ENCODE measurements at regions of chr5 and their contacts with region 1.

Region 1: GRCh38 chr5:111530298-111530740 is 18.0 kb upstream of the STARD4 start:
- DNase-seq: no peak
- H3K4me3 ChIP-seq: no peak overlapping the region
- H3K27ac ChIP-seq: no peak overlapping the region
- H3K27me3 ChIP-seq: no peaks in the 10 kb centered on the region
- CTCF ChIP-seq: no peak

Region 2: DNA sequence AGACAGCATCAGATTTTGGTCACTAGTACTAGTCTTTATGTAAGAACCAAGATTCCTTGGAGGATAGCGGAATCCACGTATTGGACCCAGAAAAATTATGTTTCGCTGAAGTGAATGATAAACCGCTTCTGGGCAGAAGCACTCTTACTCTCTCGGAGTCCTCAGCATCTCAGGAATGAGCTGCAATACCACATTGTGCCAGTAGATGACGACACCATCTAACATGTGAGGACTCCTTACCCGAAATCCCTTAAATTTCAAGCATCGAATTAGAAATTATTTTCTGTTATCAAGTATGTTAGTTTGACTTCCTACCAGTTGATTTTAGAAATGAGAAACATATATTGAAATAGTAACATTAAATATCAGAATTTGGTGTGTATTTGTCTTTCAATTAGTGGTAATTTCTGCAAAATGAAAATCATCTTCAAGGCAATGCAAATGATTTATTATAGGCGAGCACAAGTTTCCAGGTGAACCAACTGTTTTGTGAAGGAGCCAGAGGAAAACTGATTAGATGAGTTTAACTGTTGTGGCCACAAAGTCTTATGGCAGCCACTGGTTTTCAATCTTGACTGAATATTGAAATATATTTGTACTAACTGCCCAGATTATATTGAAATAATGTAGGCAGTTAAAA is 372.1 kb before region 1 on chr5:
- CTCF ChIA-PET with region 1: interaction called, 10 read pairs
- POLR2A ChIA-PET with region 1: no interaction called
- DNase-seq: peak; percentile 53
- H3K4me3 ChIP-seq: no peak overlapping the region
- H3K27ac ChIP-seq: no peak overlapping the region
- H3K27me3 ChIP-seq: no peaks in the 10 kb centered on the region
- CTCF ChIP-seq: peak; percentile 100

Region 3: DNA sequence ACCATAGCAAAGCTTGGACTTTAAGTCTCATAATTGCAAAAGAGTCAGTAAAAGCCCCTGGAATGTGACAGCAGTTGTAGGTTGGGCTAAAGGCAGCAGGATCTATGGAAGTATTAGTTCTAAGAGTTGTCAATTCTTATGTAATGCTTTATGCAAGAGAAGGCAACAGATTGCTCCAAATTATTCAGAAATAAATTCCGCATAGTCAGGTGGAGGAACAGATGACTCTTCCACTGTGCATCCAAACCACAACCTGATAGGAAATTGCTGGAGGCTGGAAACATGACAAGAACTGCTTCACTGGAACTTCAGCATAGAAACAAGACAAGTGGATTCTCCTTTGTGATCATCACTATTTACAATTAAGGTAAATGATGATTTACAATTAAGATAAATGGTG is 119.0 kb before region 1 on chr5:
- CTCF ChIA-PET with region 1: no interaction called
- POLR2A ChIA-PET with region 1: no interaction called
- DNase-seq: no peak
- H3K4me3 ChIP-seq: no peak overlapping the region
- H3K27ac ChIP-seq: no peak overlapping the region
- H3K27me3 ChIP-seq: no peaks in the 10 kb centered on the region
- CTCF ChIP-seq: no peak

Region 4: DNA sequence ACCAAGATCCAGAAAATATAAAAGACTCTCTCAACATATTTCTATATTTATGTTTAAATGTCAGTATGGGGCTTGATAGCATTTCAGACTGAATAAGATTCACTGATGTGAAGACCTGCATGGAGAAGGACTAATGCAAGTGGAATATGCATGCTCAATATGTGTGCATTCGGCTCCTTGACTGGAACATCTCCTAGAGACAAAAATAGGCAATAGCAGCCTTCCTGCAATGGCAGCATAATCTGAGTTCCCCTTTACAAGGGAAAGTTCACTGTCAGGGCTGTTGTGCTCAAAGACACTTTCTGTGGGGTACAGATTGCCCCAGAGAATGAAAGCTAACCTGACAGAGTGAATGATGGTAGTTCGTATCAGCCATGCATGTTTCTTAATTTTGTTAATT is 60.4 kb before region 1 on chr5:
- CTCF ChIA-PET with region 1: no interaction called
- POLR2A ChIA-PET with region 1: no interaction called
- DNase-seq: no peak
- H3K4me3 ChIP-seq: no peak overlapping the region
- H3K27ac ChIP-seq: no peak overlapping the region
- H3K27me3 ChIP-seq: no peaks in the 10 kb centered on the region
- CTCF ChIP-seq: no peak

Region 5: DNA sequence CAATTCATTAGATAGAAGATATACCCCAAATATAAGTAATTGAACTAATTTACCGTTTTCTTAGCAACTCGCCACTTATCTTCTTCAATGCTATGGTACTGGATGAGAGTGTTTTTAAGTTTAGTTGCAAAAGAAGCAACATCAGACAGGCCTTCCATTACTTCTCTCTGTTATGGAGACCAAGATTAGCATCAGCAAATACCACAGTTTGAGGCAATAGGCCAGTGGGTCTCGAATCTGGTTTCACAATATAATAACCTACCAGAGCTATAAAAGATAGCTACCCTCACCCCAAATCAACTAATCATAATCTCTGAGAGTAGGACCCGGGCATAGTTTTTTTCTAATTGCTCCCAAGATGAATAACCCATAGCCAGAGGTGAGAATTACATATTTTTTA is 23.0 kb before region 1 on chr5:
- CTCF ChIA-PET with region 1: interaction called, 61 read pairs
- POLR2A ChIA-PET with region 1: no interaction called
- DNase-seq: no peak
- H3K4me3 ChIP-seq: no peak overlapping the region
- H3K27ac ChIP-seq: no peak overlapping the region
- H3K27me3 ChIP-seq: no peaks in the 10 kb centered on the region
- CTCF ChIP-seq: no peak

Region 6: GRCh38 chr5:111550279-111551020 is 20.1 kb after region 1 on chr5:
- CTCF ChIA-PET with region 1: interaction called, 62 read pairs
- POLR2A ChIA-PET with region 1: no interaction called
- DNase-seq: peak; percentile 94
- H3K4me3 ChIP-seq: no peak overlapping the region
- H3K27ac ChIP-seq: no peak overlapping the region
- H3K27me3 ChIP-seq: no peaks in the 10 kb centered on the region
- CTCF ChIP-seq: peak; percentile 66

Region 7: DNA sequence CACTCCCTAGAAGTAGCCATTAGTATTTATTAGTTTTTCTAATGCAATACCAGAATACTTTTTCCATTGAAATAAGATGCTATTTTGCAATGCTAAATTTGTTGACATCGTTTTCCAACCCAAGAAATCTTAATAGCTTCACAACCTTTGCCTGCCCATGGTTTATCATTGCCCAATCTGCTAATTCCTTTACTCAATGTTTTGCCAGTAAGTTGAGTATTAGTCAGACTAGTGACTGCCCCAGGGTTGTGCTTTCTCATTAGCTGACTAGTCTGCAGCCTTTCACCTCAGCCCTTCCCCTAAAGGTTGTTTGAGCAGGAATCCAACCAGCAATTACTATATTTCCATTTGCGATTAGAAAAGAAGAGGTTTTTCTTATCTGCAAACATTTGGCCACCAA is 163.9 kb after region 1 on chr5:
- CTCF ChIA-PET with region 1: interaction called, 11 read pairs
- POLR2A ChIA-PET with region 1: no interaction called
- DNase-seq: no peak
- H3K4me3 ChIP-seq: no peak overlapping the region
- H3K27ac ChIP-seq: no peak overlapping the region
- H3K27me3 ChIP-seq: no peaks in the 10 kb centered on the region
- CTCF ChIP-seq: no peak

Region 8: DNA sequence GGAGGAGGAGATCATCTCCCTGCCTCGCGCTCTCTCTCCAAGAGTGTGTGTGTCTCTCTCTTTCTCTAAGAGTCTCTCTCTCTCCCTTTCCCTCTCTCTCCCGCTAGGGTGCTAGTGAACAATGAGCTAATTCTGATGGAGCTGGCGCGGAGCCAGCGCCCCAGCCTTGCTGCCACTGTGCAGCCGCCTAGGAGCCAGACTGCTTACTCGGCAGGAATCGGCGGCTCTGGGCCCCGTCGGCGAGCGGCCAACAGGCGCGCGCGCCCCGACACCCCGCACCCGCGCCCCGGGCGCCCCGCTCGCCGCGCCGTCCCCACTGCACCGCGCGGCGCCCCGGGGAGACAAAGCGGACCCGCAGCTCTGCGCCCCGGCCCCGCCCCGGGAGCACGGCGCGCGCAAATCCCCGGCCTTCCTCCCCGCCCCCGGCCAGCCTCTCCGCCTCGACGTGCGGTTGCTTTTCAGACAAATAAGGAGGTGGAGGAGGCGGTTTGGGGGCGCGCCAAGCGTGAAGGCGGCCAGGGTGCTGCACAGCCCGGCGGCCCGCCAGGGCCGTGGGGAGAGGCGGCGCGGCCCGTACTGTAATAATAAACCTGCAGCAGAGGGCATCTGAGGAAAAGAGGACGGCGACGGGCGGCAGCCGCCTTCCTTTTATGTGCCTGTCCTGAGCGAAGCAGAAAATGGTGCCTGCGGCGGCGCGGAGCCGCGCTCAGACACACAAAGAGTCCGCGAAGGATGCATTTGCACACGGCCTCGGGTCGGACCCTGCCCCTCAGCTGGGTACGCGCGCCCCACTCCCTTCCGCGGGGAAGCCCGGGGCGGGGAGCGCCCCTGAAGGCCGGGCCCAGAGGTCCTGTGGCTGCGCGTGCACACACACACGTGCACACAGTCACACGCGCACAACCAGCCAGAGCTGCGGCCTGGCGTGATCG is 227.3 kb after region 1 on chr5:
- CTCF ChIA-PET with region 1: interaction called, 12 read pairs
- POLR2A ChIA-PET with region 1: no interaction called
- DNase-seq: peak; percentile 89
- H3K4me3 ChIP-seq: peak overlapping the region; percentile 87
- H3K27ac ChIP-seq: peak overlapping the region; percentile 96
- H3K27me3 ChIP-seq: no peaks in the 10 kb centered on the region
- CTCF ChIP-seq: peak; percentile 65

Region 9: GRCh38 chr5:112160652-112161391 is 630.5 kb after region 1 on chr5:
- CTCF ChIA-PET with region 1: interaction called, 26 read pairs
- POLR2A ChIA-PET with region 1: no interaction called
- DNase-seq: peak; percentile 87
- H3K4me3 ChIP-seq: peak overlapping the region; percentile 97
- H3K27ac ChIP-seq: peak overlapping the region; percentile 83
- H3K27me3 ChIP-seq: no peaks in the 10 kb centered on the region
- CTCF ChIP-seq: peak; percentile 99

Region 10: GRCh38 chr5:113102121-113102531 is 1571.8 kb after region 1 on chr5:
- CTCF ChIA-PET with region 1: no interaction called
- POLR2A ChIA-PET with region 1: no interaction called
- DNase-seq: no peak
- H3K4me3 ChIP-seq: no peak overlapping the region
- H3K27ac ChIP-seq: no peak overlapping the region
- H3K27me3 ChIP-seq: no peaks in the 10 kb centered on the region
- CTCF ChIP-seq: no peak

Measured in AG04450 (cell line).